Activated naive CD4-positive, alpha-beta T cell treated with anti-CD3 and anti-CD28 coated beads, Interleukin-2, amount 10 ng/mL, durations not matched to agents 7 days and 5 days (primary cell): ENCODE measurements at regions of chr6 and their contacts with region 1.

Region 1: DNA sequence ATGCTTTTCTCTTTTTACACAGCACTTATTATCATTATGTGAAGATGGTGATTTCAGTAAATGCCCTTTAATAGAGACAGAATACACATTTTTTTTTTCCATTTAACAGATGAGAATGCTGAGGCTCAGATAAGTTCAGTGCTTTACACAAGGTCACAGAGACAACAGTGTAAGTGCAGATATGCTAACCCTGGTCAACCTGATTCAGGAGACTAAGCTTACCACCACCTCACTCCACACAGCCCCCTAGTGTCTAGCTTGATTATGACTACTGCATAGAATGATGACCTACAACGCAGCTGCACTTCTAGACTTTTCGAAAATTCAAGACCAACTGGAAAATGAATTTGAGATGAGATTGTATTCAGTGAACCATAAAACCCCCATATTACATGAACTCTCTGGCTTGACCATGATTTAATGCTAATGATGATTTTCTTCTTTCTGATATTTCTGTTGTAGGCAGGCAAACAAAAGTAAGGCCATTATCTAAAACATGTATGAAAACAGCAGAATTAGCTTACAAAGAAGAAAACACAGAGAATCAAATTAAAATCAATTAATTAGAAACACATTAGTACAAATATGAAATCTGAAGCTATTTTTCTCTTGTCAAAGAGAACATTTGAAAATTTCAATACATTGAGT is 212.1 kb upstream of the PHACTR1 start:
- DNase-seq: no peak
- H3K4me3 Mint-ChIP-seq: no peak overlapping the region
- H3K27ac Mint-ChIP-seq: no peak overlapping the region
- H3K4me1 Mint-ChIP-seq: no peaks in the 10 kb centered on the region
- H3K27me3 Mint-ChIP-seq: no peaks in the 10 kb centered on the region

Region 2: DNA sequence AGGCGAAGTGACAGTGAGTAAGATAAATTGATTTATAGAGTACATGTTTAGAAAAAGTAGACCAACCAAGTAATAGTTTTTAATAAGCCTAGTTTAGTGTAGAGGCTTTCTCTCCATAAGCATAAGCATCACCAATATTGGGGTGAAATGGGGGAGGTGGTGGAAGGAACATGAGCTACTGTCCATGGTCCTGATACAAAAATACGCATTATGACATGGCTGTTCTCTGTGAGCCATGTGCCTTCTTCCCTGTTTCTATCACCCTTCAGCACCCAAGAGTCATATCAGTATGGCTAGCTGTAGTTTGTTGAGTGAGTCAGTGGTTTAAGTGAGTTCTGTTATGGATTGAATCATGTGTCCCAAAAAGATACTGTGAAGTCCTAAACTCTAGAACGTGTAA is 63.5 kb before region 1 on chr6:
- CTCF ChIA-PET with region 1: no interaction called
- DNase-seq: no peak
- H3K4me3 Mint-ChIP-seq: no peak overlapping the region
- H3K27ac Mint-ChIP-seq: no peak overlapping the region
- H3K4me1 Mint-ChIP-seq: peaks cover 2% of the 10 kb centered on the region
- H3K27me3 Mint-ChIP-seq: no peaks in the 10 kb centered on the region

Region 3: DNA sequence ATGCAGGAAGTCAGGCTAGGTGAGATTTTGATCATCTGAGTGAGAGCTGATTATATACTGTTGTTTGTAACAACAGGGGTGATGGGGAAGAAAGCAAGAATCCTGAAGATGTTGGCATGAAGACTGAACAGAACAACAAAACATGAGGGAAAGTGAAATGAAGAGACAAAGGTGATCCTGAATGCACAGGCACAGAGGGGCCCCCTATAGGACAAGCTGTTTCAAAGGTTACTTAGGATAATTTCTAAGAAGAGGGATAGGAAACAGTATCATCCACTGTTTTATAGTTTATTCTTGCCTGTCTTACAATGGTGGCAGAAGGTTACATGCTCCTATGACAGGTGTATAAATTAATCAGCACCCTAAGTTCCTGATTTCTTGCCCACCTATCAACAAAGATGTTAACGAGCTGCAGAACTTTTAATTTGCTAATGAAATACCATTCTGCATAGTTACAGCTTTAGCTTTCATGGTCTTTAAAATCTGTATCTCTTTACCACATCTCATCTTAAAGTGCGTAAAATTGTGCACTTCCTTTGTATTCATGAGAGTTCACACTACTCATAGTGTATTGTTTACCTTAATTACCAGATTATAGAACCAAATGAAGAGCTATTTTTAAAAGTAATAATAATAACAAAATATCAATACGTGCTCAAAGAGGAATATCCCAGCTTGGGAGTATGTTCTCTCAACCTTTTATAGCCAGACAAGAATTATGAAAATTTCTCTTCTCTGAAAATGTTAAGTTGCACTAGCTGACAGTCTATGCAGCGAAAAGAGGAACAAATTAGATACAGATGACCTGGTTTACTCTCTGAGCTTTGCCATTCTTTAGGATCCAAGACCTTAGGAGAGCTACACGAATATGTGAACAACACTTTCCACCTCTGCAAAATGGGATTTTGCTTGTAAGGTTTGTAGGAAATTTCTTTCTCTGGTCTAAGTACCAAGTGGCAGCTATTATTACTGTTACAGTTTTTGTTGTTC is 21.8 kb before region 1 on chr6:
- CTCF ChIA-PET with region 1: interaction called, 12 read pairs
- DNase-seq: no peak
- H3K4me3 Mint-ChIP-seq: no peak overlapping the region
- H3K27ac Mint-ChIP-seq: no peak overlapping the region
- H3K4me1 Mint-ChIP-seq: peaks cover 4% of the 10 kb centered on the region
- H3K27me3 Mint-ChIP-seq: no peaks in the 10 kb centered on the region

Region 4: GRCh38 chr6:12572896-12573827 is 68.7 kb after region 1 on chr6:
- CTCF ChIA-PET with region 1: no interaction called
- DNase-seq: no peak
- H3K4me3 Mint-ChIP-seq: no peak overlapping the region
- H3K27ac Mint-ChIP-seq: no peak overlapping the region
- H3K4me1 Mint-ChIP-seq: no peaks in the 10 kb centered on the region
- H3K27me3 Mint-ChIP-seq: no peaks in the 10 kb centered on the region